CD14-positive monocyte (primary cell): ENCODE measurements at regions of chr16 and their contacts with region 1.

Region 1: GRCh38 chr16:57810197-57811031 is 8.1 kb upstream of the KIFC3 start:
- DNase-seq: peak; percentile 91 to 97 (median 93)
- H3K4me3 ChIP-seq: peak overlapping the region in 1 of 3 experiments; percentile 49
- H3K4me3 Mint-ChIP-seq: peak overlapping the region in 1 of 2 donors; percentile 76
- H3K27ac ChIP-seq: peak overlapping the region; percentile 16 to 61
- H3K27ac Mint-ChIP-seq: peak overlapping the region; percentile 83 to 93 (median 87)
- H3K4me1 ChIP-seq: peaks cover 25 to 30% of the 10 kb centered on the region in 2 donors
- H3K4me1 Mint-ChIP-seq: peaks cover 32% of the 10 kb centered on the region
- H3K27me3 ChIP-seq: peaks cover 0 to 6% of the 10 kb centered on the region in 2 donors
- H3K27me3 Mint-ChIP-seq: peaks cover 19 to 38% (median 33%) of the 10 kb centered on the region in 3 donors
- CTCF ChIP-seq: no peak

Region 2: GRCh38 chr16:57648590-57649442 is 161.6 kb before region 1 on chr16:
- intact Hi-C with region 1: no loop called
- DNase-seq: peak; percentile 82 to 86 (median 83)
- H3K4me3 ChIP-seq: no peak overlapping the region
- H3K4me3 Mint-ChIP-seq: no peak overlapping the region
- H3K27ac ChIP-seq: peak overlapping the region; percentile 48 to 58
- H3K27ac Mint-ChIP-seq: peak overlapping the region; percentile 26 to 93 (median 83)
- H3K4me1 ChIP-seq: peaks cover 24 to 25% of the 10 kb centered on the region in 2 donors
- H3K4me1 Mint-ChIP-seq: peaks cover 25% of the 10 kb centered on the region
- H3K27me3 ChIP-seq: peaks cover 2 to 34% of the 10 kb centered on the region in 2 donors
- H3K27me3 Mint-ChIP-seq: peaks cover 23 to 39% (median 32%) of the 10 kb centered on the region in 3 donors
- CTCF ChIP-seq: peak; percentile 100

Region 3: DNA sequence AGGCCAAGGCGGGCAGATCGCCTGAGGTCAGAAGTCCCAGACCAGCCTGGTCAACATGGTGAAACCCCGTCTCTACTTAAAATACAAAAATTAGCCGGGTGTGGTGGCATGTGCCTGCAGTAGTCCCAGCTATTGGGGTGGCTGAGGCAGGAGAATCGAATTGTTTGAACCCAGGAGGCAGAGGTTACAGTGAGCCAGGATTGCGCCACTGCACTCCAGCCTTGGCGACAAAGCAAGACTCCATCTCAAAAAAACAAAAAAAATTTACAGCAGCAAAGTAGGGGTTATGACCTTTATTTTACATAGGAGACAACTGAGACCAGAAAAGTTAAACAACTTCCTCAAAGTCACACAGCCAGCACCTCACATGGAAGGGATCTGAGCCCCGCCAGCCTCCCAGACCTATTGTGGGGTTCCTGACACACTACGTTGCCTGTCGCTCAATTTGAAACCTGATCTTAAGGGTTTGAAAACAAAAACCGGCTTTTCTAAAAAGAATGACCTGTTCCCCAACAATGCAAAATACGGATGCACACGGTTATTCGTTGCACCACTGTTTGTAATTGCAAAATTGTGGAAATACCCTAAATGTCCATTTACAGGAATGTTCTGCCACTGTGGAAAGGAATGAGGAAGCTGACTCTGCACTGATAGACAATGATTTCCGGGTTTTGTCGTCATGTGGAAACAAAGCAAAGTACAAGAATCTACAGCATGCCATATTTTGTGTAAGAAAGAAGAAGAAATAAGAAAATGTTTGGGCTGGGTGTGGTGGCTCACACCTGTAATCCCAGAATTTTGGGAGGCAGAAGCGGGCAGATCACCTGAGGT is 83.4 kb after region 1 on chr16:
- intact Hi-C with region 1: loop called in 1 of 2 experiments (anchors 2 kb)
- DNase-seq: peak; percentile 93 to 97 (median 96)
- H3K4me3 ChIP-seq: peak overlapping the region in 1 of 3 experiments; percentile 60
- H3K4me3 Mint-ChIP-seq: peak overlapping the region; percentile 28 to 88
- H3K27ac ChIP-seq: peak overlapping the region; percentile 85 to 98
- H3K27ac Mint-ChIP-seq: peak overlapping the region; percentile 92 to 98 (median 96)
- H3K4me1 ChIP-seq: peaks cover 49 to 53% of the 10 kb centered on the region in 2 donors
- H3K4me1 Mint-ChIP-seq: peaks cover 58% of the 10 kb centered on the region
- H3K27me3 ChIP-seq: no peaks in the 10 kb centered on the region
- H3K27me3 Mint-ChIP-seq: peaks cover 0 to 2% (median 0%) of the 10 kb centered on the region in 3 donors
- CTCF ChIP-seq: no peak

Region 4: GRCh38 chr16:57984331-57985203 is 174.2 kb after region 1 on chr16:
- intact Hi-C with region 1: no loop called
- DNase-seq: peak; percentile 70 to 84 (median 78)
- H3K4me3 ChIP-seq: peak overlapping the region; percentile 20 to 75 (median 37)
- H3K4me3 Mint-ChIP-seq: peak overlapping the region; percentile 84 to 92
- H3K27ac ChIP-seq: no peak overlapping the region
- H3K27ac Mint-ChIP-seq: peak overlapping the region in 3 of 7 donors; percentile 13 to 55 (median 30)
- H3K4me1 ChIP-seq: peaks cover 13 to 15% of the 10 kb centered on the region in 2 donors
- H3K4me1 Mint-ChIP-seq: peaks cover 11% of the 10 kb centered on the region
- H3K27me3 ChIP-seq: peaks cover 0 to 25% of the 10 kb centered on the region in 2 donors
- H3K27me3 Mint-ChIP-seq: peaks cover 31 to 37% (median 36%) of the 10 kb centered on the region in 3 donors
- CTCF ChIP-seq: no peak